Activated CD4-positive, alpha-beta memory T cell treated with anti-CD3 and anti-CD28 coated beads, Interleukin-2, amount 10 ng/mL, durations not matched to agents 7 days and 5 days (primary cell): ENCODE measurements at regions of chr17 and their contacts with region 1.

Region 1: DNA sequence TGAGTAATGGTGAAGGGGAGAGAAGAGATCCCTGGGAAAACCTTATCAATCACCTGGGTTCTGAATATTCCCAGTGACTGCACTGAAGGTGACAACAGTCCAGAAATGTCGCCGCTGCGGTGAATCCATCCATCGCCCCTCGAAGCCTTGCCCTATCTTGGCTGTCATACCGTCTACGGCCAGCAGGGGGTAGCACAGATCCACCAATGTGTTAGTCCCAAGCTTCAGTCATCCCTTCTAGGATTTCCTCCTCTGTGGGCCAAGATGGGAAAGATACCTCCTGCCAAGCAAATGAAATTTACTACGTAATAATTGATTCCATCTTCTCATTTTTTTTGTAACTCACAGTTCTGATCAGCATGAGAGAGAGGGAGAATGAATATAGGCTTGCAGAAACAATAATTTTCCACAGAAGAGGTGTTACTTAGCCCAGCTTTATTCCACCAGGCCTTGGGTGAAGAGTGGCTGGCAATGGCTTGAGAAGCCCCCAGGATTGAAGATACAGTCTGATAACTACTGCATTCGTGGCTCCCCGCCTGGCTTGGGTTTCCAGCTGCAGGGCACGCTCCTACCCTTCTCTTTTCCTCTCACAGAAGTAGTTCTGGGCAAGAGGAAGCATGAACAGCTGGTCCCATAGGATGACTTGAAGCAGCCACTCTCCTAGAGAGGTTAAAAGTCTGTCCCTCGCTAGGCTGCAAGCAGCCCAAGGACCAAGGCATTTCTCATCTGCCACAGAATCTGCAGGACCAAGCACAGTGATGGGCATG is 2.6 kb upstream of the FMNL1 start:
- DNase-seq: peak; percentile 86
- H3K4me3 Mint-ChIP-seq: peak overlapping the region; percentile 85
- H3K27ac Mint-ChIP-seq: peak overlapping the region; percentile 75
- H3K4me1 Mint-ChIP-seq: peaks cover 30% of the 10 kb centered on the region
- H3K27me3 Mint-ChIP-seq: no peaks in the 10 kb centered on the region

Region 2: DNA sequence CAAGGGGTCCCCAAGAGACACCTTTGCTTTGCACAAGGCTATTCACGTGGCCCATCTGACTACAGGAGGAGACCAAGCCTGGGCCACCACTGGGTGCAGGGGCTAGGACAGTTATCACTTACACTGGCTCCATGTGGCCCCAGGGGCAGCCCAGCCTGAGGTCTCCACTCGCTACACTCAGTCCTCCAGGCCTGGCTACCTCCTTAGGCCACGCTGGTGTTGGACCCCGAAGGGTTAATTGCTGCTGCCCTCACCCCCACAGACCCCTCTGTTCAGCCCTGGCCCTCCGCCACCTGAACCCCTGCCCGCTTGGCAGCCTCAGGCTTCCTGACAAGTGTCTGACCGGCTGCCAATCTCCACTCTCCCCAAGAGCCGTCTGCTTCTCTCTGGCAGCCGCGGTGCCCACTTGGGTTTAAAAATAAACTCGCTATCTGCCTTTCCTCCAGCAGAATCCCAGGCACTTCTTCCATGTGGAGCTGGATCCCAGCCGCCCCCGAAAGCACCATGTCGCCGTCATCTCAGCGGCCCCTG is 432.5 kb before region 1 on chr17:
- CTCF ChIA-PET with region 1: no interaction called
- POLR2A ChIA-PET with region 1: no interaction called
- DNase-seq: no peak
- H3K4me3 Mint-ChIP-seq: no peak overlapping the region
- H3K27ac Mint-ChIP-seq: no peak overlapping the region
- H3K4me1 Mint-ChIP-seq: no peaks in the 10 kb centered on the region
- H3K27me3 Mint-ChIP-seq: no peaks in the 10 kb centered on the region

Region 3: DNA sequence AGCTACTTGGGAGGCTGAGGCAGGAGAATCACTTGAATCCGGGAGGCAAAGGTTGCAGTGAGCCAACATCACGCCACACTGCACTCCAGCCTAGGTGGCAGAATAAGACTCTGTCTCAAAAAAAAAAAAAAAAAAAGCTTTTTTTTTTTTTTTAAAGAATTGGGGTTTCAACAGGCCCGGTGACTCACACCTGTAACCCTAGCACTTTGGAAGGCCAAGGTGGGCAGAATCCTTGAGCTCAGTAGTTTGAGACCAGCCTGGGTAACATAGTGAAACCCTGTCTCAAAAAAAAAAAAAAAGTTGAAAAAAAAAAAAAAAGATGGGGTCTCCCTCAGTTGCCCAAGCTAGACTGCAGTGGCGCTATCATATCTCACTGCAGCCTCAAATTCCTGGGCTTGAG is 64.0 kb before region 1 on chr17:
- CTCF ChIA-PET with region 1: interaction called, 26 read pairs
- POLR2A ChIA-PET with region 1: interaction called, 37 read pairs
- DNase-seq: no peak
- H3K4me3 Mint-ChIP-seq: no peak overlapping the region
- H3K27ac Mint-ChIP-seq: no peak overlapping the region
- H3K4me1 Mint-ChIP-seq: peaks cover 44% of the 10 kb centered on the region
- H3K27me3 Mint-ChIP-seq: no peaks in the 10 kb centered on the region

Region 4: DNA sequence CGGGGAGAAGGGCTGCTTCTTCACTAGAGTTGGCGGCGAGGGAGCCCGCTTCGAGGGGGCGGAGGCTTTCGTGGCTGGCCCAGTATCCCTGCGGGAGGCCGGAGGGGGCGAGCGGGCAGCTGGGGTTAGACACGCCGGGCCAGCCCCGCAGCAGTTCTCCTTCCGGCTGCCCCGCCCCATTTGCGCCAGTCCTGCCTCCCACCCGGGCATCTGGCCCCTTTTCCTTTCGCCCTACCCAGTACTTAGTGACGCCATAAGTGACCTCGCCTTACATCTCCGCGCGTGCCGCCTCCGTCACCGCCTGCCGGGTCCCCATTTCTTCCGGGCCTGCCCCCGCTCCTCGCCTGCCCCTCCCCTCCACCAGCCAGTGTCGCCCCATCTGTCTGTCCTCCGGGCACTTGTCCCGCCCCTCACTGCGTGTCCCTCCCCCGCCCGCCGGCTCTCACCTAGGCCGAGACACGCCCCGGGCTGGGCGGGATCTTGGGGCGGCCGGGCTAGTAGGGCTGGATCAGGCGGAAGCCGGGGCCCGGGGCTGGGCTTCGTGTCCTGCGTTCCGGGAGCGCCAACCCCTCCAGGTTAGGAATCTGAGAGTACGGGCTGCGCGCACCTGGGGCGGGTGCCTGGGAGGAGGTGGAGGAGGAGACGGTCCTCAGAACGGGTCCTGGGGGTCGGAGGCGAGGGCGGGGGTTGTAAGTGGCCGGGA is 28.5 kb after region 1 on chr17:
- CTCF ChIA-PET with region 1: interaction called, 34 read pairs
- POLR2A ChIA-PET with region 1: interaction called, 528 read pairs
- DNase-seq: peak; percentile 99
- H3K4me3 Mint-ChIP-seq: peak overlapping the region; percentile 87
- H3K27ac Mint-ChIP-seq: peak overlapping the region; percentile 84
- H3K4me1 Mint-ChIP-seq: peaks cover 62% of the 10 kb centered on the region
- H3K27me3 Mint-ChIP-seq: no peaks in the 10 kb centered on the region

Region 5: DNA sequence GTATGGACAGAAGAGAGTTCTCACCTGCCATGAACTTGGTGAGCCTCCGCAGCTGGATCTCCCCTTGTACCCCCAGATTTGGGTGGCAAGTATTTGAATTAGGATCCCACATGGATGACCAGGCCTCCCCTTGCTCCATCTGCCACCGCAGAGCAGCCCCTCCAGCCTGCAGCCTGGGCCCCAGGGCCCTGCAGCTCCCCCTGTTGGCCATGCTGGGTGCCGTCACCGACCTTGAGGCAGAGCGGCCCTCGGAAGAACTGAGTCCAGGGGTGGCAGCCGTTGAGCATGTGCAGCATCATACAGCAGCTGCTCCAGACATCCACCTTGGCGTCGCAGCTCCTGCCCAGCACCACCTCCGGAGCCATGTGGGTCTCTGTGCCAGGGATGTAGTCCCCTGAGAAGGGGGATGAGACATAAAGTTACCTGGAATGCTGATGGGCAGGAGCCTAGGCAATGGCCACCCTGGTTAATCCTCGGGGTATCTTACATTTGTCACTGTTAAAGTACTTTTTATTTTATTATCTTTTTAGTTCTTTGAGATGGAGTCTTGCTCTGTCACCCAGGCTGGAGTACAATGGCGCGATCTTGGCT is 51.8 kb after region 1 on chr17:
- CTCF ChIA-PET with region 1: interaction called, 43 read pairs
- POLR2A ChIA-PET with region 1: interaction called, 6 read pairs
- DNase-seq: peak; percentile 44
- H3K4me3 Mint-ChIP-seq: no peak overlapping the region
- H3K27ac Mint-ChIP-seq: no peak overlapping the region
- H3K4me1 Mint-ChIP-seq: no peaks in the 10 kb centered on the region
- H3K27me3 Mint-ChIP-seq: no peaks in the 10 kb centered on the region

Region 6: DNA sequence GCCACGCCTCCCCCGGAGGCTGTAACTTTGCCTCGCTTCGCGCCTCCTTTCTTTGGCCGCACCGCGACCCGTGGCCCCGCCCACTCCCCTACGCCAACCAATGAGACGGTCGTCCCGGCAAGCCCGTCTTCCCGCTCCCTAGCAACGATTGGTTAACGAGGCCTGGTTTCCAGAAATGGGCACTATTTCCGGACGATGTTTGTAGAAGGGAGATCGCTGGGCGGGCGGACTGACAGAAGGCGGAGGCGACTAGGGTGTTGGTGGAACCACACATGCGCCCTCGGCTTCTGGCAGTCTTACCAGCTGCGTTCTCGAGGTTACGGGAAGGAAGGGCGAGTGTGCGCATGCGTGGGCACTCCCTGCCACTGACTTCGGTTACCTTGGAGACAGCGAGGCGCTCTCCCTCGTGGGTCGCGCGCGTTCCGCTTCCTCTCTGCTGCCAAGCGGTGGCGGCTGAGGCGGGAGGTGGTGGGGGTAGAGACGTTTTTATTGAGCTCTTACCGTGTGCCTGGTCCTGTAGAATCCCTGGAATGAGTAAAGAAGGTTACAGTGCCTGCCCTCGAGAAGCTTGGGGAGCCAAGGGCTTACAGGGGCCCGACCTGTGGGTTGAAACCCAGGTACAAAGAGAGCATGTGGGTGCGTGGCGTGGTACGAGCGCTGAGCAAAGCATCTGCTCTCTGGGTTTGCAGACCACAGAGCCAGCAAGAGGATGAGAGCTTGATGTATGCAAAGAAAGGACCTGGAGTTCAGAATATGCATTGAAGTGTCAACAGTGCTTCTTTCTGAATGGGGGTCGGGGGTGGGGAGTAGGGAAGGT is 98.2 kb after region 1 on chr17:
- CTCF ChIA-PET with region 1: interaction called, 10 read pairs
- POLR2A ChIA-PET with region 1: interaction called, 337 read pairs
- DNase-seq: peak; percentile 100
- H3K4me3 Mint-ChIP-seq: peak overlapping the region; percentile 82
- H3K27ac Mint-ChIP-seq: peak overlapping the region; percentile 82
- H3K4me1 Mint-ChIP-seq: peaks cover 73% of the 10 kb centered on the region
- H3K27me3 Mint-ChIP-seq: no peaks in the 10 kb centered on the region